ENCODE measurements at regions of chr5 and their contacts with region 1.

Region 1: DNA sequence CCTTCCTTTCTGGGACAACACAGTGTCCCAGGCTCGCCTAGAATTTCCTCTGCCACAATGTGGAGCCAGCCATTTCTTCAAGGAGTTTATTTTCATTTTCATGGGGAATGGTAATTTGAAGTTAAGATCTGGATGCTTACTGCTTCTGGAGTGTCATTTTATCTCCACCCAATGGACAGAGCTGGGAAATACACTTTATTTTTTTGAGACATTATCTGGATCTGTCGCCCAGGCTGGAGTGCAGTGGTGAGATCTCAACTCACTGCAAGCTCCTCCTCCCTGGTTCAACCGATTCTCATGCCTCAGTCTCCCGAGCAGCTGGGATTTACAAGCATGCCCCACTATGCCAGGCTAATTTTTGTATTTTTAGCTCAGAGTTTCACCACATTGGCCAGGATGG is 12.7 kb upstream of the THG1L start:
- DNase-seq: peak; percentile 52
- H3K4me3 ChIP-seq: no peak overlapping the region
- H3K27ac ChIP-seq: no peak overlapping the region
- H3K4me1 ChIP-seq: no peaks in the 10 kb centered on the region
- H3K27me3 ChIP-seq: no peaks in the 10 kb centered on the region
- CTCF ChIP-seq: peak; percentile 39 to 64

Region 2: DNA sequence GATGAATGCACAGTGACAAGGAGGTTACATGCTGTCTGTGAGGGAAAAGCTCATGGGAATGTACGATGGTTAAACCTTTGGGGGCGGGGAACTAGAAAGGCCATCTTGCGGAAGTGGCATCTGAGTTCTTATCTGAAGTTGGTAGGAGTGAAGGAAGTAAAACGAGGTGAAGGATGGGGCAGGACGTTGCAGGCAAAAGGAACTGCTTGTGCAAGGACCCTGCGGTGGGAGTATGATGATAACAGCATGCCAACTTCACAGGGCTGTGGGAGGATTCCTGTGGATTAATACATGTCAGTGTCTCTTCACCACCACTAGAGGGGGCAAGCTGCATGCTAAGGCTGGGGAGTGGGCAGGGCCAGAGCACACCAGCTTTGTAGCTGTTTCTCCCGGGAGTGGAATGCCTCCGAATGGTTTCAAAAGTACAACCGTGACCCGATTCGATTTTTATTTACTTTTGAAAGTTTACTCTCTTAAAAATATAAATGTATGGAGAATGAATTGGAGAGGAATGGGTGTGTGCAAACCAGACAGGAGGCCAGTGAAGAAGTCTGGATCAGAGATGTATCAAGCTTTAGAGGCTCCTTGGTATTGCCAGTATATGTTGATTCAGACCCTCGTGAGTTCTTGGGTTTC is 390.1 kb before region 1 on chr5:
- CTCF ChIA-PET with region 1: no interaction called
- dilution Hi-C with region 1: no loop called
- in situ Hi-C with region 1: loop called in 1 of 2 experiments (anchors 10 kb)
- intact Hi-C with region 1: loop called (anchors 5 kb)
- DNase-seq: peak; percentile 52
- H3K4me3 ChIP-seq: peak overlapping the region in 1 of 3 experiments; percentile 34
- H3K27ac ChIP-seq: no peak overlapping the region
- H3K4me1 ChIP-seq: no peaks in the 10 kb centered on the region
- H3K27me3 ChIP-seq: no peaks in the 10 kb centered on the region
- CTCF ChIP-seq: peak; percentile 97

Region 3: DNA sequence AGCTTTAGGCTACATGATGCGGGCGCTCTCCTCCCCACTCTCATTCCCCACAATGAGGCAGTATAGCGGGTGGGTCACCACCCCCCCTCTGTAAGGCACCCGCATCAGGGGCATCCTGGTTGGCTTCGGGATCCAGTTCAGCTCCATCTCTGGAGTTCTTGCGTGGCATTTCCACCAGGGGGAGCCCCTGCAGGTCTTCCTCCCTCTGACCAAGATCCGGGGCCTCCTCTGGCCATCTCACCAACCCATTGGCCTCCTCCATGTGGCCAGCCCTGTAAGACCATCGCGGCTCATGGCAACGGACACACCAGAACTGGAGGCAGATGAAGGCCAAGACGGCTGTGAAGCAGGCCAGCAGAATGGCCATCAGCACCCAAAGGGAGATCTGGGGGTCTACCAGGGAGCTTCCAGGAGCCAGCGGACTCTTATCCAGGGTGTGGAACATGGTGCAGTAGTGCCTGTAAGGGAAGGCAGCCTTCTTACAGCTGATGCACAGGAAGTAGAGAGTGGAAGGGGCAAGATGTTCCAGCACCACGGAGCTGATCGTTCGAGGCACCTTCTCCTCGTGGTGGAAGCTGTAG is 375.6 kb before region 1 on chr5:
- CTCF ChIA-PET with region 1: no interaction called
- dilution Hi-C with region 1: no loop called
- in situ Hi-C with region 1: no loop called
- intact Hi-C with region 1: loop called (anchors 2 kb)
- DNase-seq: peak; percentile 6
- H3K4me3 ChIP-seq: no peak overlapping the region
- H3K27ac ChIP-seq: no peak overlapping the region
- H3K4me1 ChIP-seq: no peaks in the 10 kb centered on the region
- H3K27me3 ChIP-seq: no peaks in the 10 kb centered on the region
- CTCF ChIP-seq: peak; percentile 61 to 76

Region 4: DNA sequence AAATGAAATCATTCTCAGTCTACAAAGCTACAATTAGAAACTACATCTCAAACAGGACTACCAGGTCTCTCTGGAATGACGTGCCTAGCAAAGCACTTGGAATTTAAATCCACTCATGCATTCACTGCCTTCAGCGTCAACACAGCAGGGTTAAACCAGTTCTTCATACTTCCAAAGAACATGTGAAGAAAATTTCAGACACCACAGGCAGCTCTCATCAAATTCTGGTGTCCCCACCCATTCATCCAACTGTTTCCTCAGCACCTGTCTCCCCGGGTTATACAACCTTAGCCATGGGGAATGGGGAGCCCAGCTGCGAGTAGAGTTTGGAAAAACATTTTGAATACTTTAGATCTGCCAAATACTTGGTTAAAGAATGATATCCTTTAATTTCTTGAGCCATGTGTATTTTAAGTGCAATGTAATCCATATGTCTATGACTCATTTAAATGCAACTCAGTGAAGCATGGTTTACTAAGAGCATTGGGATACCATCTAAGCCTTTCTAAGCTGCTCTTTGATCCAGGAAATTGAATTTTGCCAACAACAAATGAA is 160.4 kb before region 1 on chr5:
- CTCF ChIA-PET with region 1: no interaction called
- dilution Hi-C with region 1: no loop called
- in situ Hi-C with region 1: no loop called
- intact Hi-C with region 1: loop called (anchors 10 kb)
- DNase-seq: peak; percentile 43
- H3K4me3 ChIP-seq: no peak overlapping the region
- H3K27ac ChIP-seq: peak overlapping the region; percentile 5
- H3K4me1 ChIP-seq: peaks cover 42% of the 10 kb centered on the region
- H3K27me3 ChIP-seq: no peaks in the 10 kb centered on the region
- CTCF ChIP-seq: no peak

Region 5: DNA sequence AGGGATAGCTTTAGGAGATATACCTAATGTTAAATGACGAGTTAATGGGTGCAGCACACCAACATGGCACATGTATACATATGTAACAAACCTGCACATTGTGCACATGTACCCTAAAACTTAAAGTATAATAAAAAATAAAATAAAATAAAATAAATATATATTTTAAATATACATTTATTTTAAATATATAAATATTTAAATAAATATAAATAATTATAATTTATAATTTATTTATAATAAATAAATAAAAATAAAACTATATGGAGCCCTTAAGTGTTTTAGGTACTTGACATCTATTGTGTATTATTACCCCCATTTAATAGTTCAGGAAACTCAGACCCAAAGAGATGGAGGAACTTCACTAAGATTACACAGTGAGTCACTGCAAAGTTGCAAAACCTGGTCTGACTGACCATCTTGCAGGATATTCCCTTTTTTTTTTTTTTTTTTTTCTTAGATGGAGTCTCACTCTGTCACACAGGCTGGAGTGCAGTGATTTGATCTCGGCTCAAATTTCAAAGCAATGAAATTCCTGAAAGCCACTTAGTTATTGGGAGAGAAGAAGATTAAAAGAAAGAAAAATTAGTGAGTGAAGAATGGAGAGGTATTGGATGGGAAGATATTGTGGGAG is 52.9 kb before region 1 on chr5:
- CTCF ChIA-PET with region 1: no interaction called
- dilution Hi-C with region 1: no loop called
- in situ Hi-C with region 1: loop called in 1 of 2 experiments (anchors 5 kb)
- intact Hi-C with region 1: loop called (anchors 1 kb)
- DNase-seq: peak; percentile 85
- H3K4me3 ChIP-seq: no peak overlapping the region
- H3K27ac ChIP-seq: no peak overlapping the region
- H3K4me1 ChIP-seq: peaks cover 6% of the 10 kb centered on the region
- H3K27me3 ChIP-seq: no peaks in the 10 kb centered on the region
- CTCF ChIP-seq: no peak